ENCODE measurements at regions of chr13 and their contacts with region 1.

Region 1: GRCh38 chr13:31431722-31432137 is 232.0 kb downstream of the B3GLCT start:
- DNase-seq: peak; percentile 54
- H3K4me3 ChIP-seq: no peak overlapping the region
- H3K27ac ChIP-seq: no peak overlapping the region
- H3K4me1 ChIP-seq: no peaks in the 10 kb centered on the region
- H3K27me3 ChIP-seq: no peaks in the 10 kb centered on the region
- CTCF ChIP-seq: peak; percentile 70

Region 2: GRCh38 chr13:31538067-31539042 is 106.6 kb after region 1 on chr13:
- CTCF ChIA-PET with region 1: interaction called, 3 read pairs
- POLR2A ChIA-PET with region 1: no interaction called
- intact Hi-C with region 1: loop called (anchors 5 kb)
- DNase-seq: peak; percentile 35
- H3K4me3 ChIP-seq: no peak overlapping the region
- H3K27ac ChIP-seq: no peak overlapping the region
- H3K4me1 ChIP-seq: no peaks in the 10 kb centered on the region
- H3K27me3 ChIP-seq: no peaks in the 10 kb centered on the region
- CTCF ChIP-seq: peak; percentile 70

Region 3: GRCh38 chr13:31742097-31742734 is 310.5 kb after region 1 on chr13:
- CTCF ChIA-PET with region 1: no interaction called
- POLR2A ChIA-PET with region 1: no interaction called
- intact Hi-C with region 1: loop called (anchors 1 kb)
- DNase-seq: peak; percentile 72
- H3K4me3 ChIP-seq: no peak overlapping the region
- H3K27ac ChIP-seq: no peak overlapping the region
- H3K4me1 ChIP-seq: no peaks in the 10 kb centered on the region
- H3K27me3 ChIP-seq: no peaks in the 10 kb centered on the region
- CTCF ChIP-seq: peak; percentile 95

Region 4: DNA sequence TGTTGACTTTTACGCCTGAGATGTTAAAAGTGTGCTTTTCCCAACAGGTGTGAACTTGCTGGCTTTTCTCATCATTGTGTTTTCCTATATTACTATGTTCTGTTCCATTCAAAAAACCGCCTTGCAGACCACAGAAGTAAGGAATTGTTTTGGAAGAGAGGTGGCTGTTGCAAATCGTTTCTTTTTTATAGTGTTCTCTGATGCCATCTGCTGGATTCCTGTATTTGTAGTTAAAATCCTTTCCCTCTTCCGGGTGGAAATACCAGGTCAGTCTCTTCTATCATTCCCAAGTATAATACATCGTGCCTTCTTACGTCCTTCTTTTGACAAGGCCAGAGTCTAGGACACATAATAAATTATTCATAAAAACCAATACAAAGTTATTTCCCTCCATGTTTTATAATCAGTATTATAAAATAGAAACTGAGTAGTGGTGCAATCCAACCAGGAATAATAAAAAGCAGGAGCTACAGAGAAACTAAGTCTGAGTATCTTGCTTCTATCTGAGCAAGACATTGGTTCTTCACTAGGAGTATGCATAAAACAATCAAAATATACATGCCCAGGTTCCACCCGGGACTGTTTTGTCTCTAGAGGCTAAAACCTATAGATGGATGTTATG is 365.5 kb after region 1 on chr13:
- CTCF ChIA-PET with region 1: no interaction called
- POLR2A ChIA-PET with region 1: no interaction called
- intact Hi-C with region 1: loop called (anchors 5 kb)
- DNase-seq: peak; percentile 27
- H3K4me3 ChIP-seq: no peak overlapping the region
- H3K27ac ChIP-seq: no peak overlapping the region
- H3K4me1 ChIP-seq: no peaks in the 10 kb centered on the region
- H3K27me3 ChIP-seq: no peaks in the 10 kb centered on the region
- CTCF ChIP-seq: peak; percentile 54

Region 5: DNA sequence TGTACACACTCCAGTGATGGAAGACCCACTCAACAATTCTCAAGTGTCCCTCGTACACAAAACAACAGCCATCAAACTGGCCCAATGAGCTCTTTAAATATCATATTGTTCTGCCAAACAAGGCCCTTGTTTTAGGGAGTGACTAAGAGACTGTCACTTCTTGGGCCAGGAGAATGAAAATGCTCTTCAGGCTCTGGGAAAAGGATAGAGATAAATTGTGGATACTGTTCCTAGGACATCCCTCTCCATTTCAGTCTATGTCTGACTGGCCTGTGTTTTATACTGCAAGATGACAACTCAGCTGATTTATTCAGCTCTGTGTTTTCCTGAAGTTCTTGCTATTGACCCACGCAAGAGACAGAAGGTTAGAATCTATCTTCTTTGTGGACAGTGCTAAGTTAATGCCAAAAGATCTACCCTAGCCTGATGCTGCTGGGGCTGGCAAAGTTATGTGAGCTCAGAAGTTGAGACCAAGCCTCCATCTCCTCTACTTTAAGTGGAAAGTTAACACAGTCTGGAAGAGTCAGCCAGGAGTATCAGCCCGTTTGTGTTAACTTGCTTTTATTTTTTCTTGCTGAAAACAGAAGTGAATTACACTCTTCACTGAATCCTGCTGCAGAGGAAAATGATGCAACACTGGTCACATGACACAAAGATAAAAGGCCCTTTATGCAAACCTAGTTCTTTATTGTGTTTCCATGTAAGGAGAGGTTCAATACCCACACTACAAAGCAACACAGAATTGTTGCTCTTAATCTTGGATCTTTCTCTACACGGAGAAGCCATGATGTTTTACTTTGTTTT is 614.5 kb after region 1 on chr13:
- CTCF ChIA-PET with region 1: no interaction called
- POLR2A ChIA-PET with region 1: no interaction called
- intact Hi-C with region 1: no loop called
- DNase-seq: peak; percentile 28
- H3K4me3 ChIP-seq: no peak overlapping the region
- H3K27ac ChIP-seq: peak overlapping the region; percentile 61
- H3K4me1 ChIP-seq: peaks cover 14% of the 10 kb centered on the region
- H3K27me3 ChIP-seq: no peaks in the 10 kb centered on the region
- CTCF ChIP-seq: no peak